ENCODE measurements at regions of chr7 and their contacts with region 1.

Region 1: GRCh38 chr7:37408291-37409228 is 40.1 kb downstream of the ELMO1 start:
- DNase-seq: no peak
- H3K4me3 Mint-ChIP-seq: peak overlapping the region; percentile 83
- H3K27ac Mint-ChIP-seq: peak overlapping the region; percentile 96
- H3K4me1 Mint-ChIP-seq: peaks cover 78% of the 10 kb centered on the region
- H3K27me3 Mint-ChIP-seq: no peaks in the 10 kb centered on the region

Region 2: GRCh38 chr7:37365405-37365804 is 43.2 kb before region 1 on chr7:
- intact Hi-C with region 1: loop called (anchors 2 kb)
- DNase-seq: no peak
- H3K4me3 Mint-ChIP-seq: peak overlapping the region; percentile 16
- H3K27ac Mint-ChIP-seq: peak overlapping the region; percentile 3
- H3K4me1 Mint-ChIP-seq: peaks cover 56% of the 10 kb centered on the region
- H3K27me3 Mint-ChIP-seq: peaks cover 2% of the 10 kb centered on the region

Region 3: GRCh38 chr7:37420946-37421695 is 12.6 kb after region 1 on chr7:
- intact Hi-C with region 1: no loop called
- DNase-seq: no peak
- H3K4me3 Mint-ChIP-seq: no peak overlapping the region
- H3K27ac Mint-ChIP-seq: no peak overlapping the region
- H3K4me1 Mint-ChIP-seq: peaks cover 11% of the 10 kb centered on the region
- H3K27me3 Mint-ChIP-seq: no peaks in the 10 kb centered on the region

Region 4: DNA sequence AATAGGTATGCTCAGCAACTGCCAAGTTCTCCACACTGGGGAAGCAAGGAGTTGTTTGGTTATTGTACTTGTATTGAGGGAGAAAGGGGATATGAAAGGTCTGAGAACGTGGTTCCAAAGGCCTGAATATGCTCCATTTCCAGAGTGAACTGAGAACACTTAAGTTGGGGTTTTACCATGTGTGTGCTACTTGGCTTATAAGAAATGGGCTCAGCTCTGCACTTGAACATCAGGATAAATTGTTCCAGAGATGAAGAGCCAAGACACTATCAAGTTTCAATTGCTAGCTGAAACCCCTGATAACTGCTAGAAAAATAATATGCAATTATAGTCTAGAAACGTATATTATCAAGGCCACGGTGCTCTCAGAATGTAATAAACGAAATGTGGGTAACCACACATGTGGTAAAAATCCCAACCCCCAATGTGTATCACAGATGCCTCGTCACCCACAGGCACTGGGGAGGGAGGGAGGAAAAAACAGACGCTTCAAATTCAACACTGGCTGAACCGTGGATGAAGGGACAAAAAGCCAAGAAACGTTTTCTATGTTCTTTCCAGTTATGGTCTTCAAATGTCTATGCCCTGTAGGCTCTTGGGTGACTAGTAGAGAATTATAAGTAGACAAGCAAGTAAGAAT is 23.8 kb after region 1 on chr7:
- intact Hi-C with region 1: loop called (anchors 1 kb)
- DNase-seq: no peak
- H3K4me3 Mint-ChIP-seq: no peak overlapping the region
- H3K27ac Mint-ChIP-seq: peak overlapping the region; percentile 71
- H3K4me1 Mint-ChIP-seq: peaks cover 49% of the 10 kb centered on the region
- H3K27me3 Mint-ChIP-seq: no peaks in the 10 kb centered on the region

Region 5: GRCh38 chr7:37440738-37441385 is 32.3 kb after region 1 on chr7:
- intact Hi-C with region 1: loop called (anchors 1 kb)
- DNase-seq: peak; percentile 27
- H3K4me3 Mint-ChIP-seq: peak overlapping the region; percentile 66
- H3K27ac Mint-ChIP-seq: peak overlapping the region; percentile 95
- H3K4me1 Mint-ChIP-seq: peaks cover 64% of the 10 kb centered on the region
- H3K27me3 Mint-ChIP-seq: no peaks in the 10 kb centered on the region

Region 6: GRCh38 chr7:37495574-37496184 is 87.1 kb after region 1 on chr7:
- intact Hi-C with region 1: loop called (anchors 5 kb)
- DNase-seq: no peak
- H3K4me3 Mint-ChIP-seq: no peak overlapping the region
- H3K27ac Mint-ChIP-seq: no peak overlapping the region
- H3K4me1 Mint-ChIP-seq: peaks cover 10% of the 10 kb centered on the region
- H3K27me3 Mint-ChIP-seq: no peaks in the 10 kb centered on the region

Region 7: DNA sequence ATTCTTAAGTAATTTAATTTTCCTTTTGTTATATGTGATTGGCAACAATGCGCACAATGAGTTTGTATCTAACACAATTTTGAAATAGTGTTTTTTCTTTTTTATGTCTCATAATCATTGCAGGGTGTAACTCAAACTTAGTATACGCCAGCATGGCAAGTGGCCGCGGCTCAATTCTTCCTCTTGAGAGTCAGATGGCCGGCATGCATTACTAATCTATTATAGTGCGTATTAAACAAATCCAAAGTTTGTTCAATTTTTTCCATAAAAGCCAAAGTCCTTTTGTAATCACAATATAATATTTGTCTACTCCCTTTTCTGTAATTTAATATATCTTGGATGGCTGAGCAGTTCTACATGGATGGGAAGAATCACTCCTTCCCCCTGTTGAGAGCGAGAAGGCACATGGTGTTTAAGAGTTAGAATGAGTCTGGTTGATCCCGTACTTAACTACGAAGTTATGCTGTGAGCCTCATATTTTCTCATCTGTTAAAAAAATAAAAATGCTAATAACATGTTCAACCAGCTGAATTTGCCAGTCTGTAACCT is 524.5 kb after region 1 on chr7:
- intact Hi-C with region 1: no loop called
- DNase-seq: no peak
- H3K4me3 Mint-ChIP-seq: no peak overlapping the region
- H3K27ac Mint-ChIP-seq: no peak overlapping the region
- H3K4me1 Mint-ChIP-seq: no peaks in the 10 kb centered on the region
- H3K27me3 Mint-ChIP-seq: no peaks in the 10 kb centered on the region

Measured in activated T-helper 1 cell treated with anti-CD3 and anti-CD28 coated beads, Interleukin-12 subunit alpha, Interleukin-12 subunit beta, Interleukin-2, Interleukin-4 antibody, amounts not matched to agents 30 ng/mL and 10 ng/mL and 1 ng/mL, durations not matched to agents 14 hours and 24 hours and 36 hours (primary cell).